MCF 10A (cell line): ENCODE measurements at regions of chr5 and their contacts with region 1.

Region 1: DNA sequence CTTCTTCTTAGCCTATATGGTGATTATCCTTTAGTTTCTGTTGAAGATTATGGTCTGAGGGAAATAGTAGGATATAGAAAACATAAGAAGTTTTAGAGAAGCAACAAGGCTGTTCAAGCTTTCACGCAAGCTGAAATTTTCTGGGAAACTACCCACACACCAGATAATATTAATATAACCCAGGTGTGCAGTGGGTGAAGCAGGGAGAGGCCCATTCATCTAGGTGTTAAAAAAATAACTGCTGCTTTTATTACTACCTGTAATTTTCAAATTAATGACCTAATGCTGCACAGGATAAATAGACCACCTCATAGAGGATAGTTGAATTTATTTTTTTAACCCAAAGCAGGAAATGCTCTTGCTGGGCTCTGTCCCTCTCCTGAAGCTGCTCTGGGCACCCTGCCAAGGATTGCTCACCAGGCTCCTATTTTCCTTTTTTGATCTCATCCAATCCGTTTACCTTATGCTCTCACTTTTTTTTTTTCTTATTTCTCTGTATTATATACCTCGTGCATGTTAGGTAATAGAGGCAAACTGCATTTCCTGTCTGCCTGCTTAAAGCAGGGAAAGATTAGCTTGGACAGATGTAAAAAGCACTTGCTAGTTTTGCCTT is 124.3 kb upstream of the SLC12A2 start:
- DNase-seq: peak; percentile 97
- H3K4me3 Mint-ChIP-seq: no peak overlapping the region
- H3K27ac Mint-ChIP-seq: peak overlapping the region; percentile 25
- H3K4me1 Mint-ChIP-seq: peaks cover 37% of the 10 kb centered on the region
- H3K27me3 Mint-ChIP-seq: no peaks in the 10 kb centered on the region
- CTCF ChIP-seq: no peak

Region 2: DNA sequence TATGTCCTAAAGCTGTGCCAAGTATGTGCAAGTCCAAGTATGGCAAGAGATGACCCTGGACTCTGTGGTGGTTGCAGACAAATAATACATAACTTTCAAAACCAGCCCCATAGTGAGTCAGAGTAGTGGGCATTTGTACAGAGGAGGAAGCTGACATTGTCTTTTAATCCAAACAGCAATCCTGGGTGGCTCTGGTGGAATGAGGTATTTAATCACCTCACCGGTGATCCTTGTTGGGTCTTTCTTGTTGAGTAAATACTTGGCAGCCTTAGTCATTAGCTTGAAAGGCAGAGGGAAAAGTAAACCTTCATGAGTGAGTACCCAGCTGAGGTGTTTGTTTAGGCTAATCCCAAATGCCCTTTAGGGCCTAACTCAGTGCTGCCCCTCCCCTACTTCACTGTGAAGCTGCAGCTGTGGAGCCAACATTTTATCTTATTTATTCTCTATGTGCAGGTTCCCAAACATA is 24.4 kb before region 1 on chr5:
- CTCF ChIA-PET with region 1: interaction called, 4 read pairs
- POLR2A ChIA-PET with region 1: interaction called, 12 read pairs
- intact Hi-C with region 1: no loop called
- DNase-seq: peak; percentile 99
- H3K4me3 Mint-ChIP-seq: no peak overlapping the region
- H3K27ac Mint-ChIP-seq: peak overlapping the region; percentile 44
- H3K4me1 Mint-ChIP-seq: peaks cover 22% of the 10 kb centered on the region
- H3K27me3 Mint-ChIP-seq: no peaks in the 10 kb centered on the region
- CTCF ChIP-seq: no peak